Endothelial cell of umbilical vein (primary cell): ENCODE measurements at regions of chr3 and their contacts with region 1.

Region 1: DNA sequence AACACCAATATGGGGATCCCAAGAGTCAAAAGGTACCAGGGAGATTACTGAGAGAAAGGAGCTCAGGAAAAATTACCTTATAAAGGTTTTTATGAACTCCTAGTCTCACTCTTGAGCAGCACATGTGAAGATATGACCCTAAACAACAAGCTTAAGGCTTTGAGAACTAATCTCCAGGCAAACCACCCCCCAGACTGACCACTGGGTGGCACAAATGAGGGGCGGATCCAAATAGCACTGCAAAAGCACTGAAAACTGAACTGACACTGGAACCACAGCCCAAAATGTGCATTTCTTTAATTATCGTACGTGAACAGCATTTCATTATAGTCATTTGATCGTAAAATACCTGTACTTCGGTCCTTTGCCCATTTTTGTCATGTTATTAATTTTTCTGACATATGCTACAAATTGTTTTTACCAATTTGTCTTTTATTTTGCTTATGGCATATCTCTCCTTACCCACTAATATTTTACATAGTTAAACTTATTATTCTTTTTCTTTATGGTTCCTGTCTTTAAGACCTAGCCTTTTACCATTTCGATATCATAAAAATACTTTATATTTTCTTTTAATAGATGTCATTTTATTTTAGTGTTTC is 31.5 kb upstream of the TFDP2 start:
- DNase-seq: peak; percentile 51
- H3K4me3 ChIP-seq: no peak overlapping the region
- H3K27ac ChIP-seq: no peak overlapping the region
- H3K4me1 ChIP-seq: no peaks in the 10 kb centered on the region
- H3K27me3 ChIP-seq: no peaks in the 10 kb centered on the region
- CTCF ChIP-seq: peak; percentile 54 to 64
- POLR2A ChIP-seq: no peak

Region 2: DNA sequence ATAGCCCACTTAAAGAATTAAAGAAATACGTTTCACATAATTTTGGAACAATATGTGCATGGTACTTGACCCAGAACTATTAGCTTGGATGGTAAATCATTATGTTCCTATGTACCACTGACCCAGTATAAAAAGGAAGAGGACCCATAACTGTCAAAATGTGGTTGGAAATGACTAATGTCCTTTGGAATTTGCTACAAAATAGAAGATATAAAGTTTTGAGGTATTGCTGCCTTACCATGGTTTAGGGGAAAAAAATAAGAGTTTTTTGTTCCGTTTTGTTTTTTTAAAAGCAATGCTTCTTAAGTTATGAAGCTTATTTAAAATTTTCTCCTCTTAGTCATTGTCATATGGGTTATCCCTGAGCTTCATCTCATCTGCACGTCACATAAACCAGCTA is 15.7 kb before region 1 on chr3:
- CTCF ChIA-PET with region 1: interaction called, 40 read pairs
- POLR2A ChIA-PET with region 1: no interaction called
- dilution Hi-C with region 1: no loop called
- intact Hi-C with region 1: no loop called
- DNase-seq: no peak
- H3K4me3 ChIP-seq: no peak overlapping the region
- H3K27ac ChIP-seq: no peak overlapping the region
- H3K4me1 ChIP-seq: peaks cover 5% of the 10 kb centered on the region
- H3K27me3 ChIP-seq: no peaks in the 10 kb centered on the region
- CTCF ChIP-seq: no peak
- POLR2A ChIP-seq: no peak

Region 3: DNA sequence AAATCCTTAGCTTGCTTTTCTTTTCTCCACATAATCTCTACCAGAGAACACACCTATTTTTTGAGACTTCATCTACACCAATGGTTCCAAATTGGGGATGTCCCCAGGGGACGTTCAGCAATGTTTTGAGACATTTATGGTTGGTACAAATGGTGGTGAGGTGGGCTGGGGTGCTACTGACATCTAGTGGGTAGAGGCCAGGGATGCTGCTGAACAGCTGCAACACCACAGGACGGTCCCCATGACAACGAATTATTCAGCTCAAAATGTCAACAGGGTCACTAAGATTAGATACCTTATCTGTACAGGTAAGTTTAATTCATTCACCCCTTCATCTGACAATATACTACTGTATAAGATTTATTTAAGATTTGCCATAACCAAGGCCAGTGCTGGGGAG is 30.2 kb after region 1 on chr3:
- CTCF ChIA-PET with region 1: interaction called, 44 read pairs
- POLR2A ChIA-PET with region 1: no interaction called
- dilution Hi-C with region 1: no loop called
- intact Hi-C with region 1: no loop called
- DNase-seq: peak; percentile 26
- H3K4me3 ChIP-seq: no peak overlapping the region
- H3K27ac ChIP-seq: no peak overlapping the region
- H3K4me1 ChIP-seq: peaks cover 9% of the 10 kb centered on the region
- H3K27me3 ChIP-seq: no peaks in the 10 kb centered on the region
- CTCF ChIP-seq: peak in 1 of 2 donors; percentile 31
- POLR2A ChIP-seq: no peak

Region 4: GRCh38 chr3:142279965-142280590 is 99.2 kb after region 1 on chr3:
- CTCF ChIA-PET with region 1: interaction called, 86 read pairs
- POLR2A ChIA-PET with region 1: no interaction called
- dilution Hi-C with region 1: no loop called
- intact Hi-C with region 1: loop called (anchors 1 kb)
- DNase-seq: peak; percentile 66
- H3K4me3 ChIP-seq: no peak overlapping the region
- H3K27ac ChIP-seq: no peak overlapping the region
- H3K4me1 ChIP-seq: no peaks in the 10 kb centered on the region
- H3K27me3 ChIP-seq: peaks cover 0 to 2% of the 10 kb centered on the region in 2 experiments
- CTCF ChIP-seq: peak; percentile 43 to 49
- POLR2A ChIP-seq: no peak